ENCODE measurements at regions of chr1 and their contacts with region 1.

Region 1: GRCh38 chr1:172429331-172430127 is 9.0 kb downstream of the C1orf105 start:
- DNase-seq: peak; percentile 63
- ATAC-seq: peak; percentile 74
- H3K4me3 ChIP-seq: no peak overlapping the region
- H3K27ac ChIP-seq: no peak overlapping the region
- H3K4me1 ChIP-seq: peaks cover 26% of the 10 kb centered on the region
- H3K27me3 ChIP-seq: no peaks in the 10 kb centered on the region
- CTCF ChIP-seq: peak; percentile 75
- EP300 ChIP-seq: no peak
- POLR2A ChIP-seq: no peak
- RAD21 ChIP-seq: peak; percentile 56; the same call in 1 of the 2 replicates

Region 2: DNA sequence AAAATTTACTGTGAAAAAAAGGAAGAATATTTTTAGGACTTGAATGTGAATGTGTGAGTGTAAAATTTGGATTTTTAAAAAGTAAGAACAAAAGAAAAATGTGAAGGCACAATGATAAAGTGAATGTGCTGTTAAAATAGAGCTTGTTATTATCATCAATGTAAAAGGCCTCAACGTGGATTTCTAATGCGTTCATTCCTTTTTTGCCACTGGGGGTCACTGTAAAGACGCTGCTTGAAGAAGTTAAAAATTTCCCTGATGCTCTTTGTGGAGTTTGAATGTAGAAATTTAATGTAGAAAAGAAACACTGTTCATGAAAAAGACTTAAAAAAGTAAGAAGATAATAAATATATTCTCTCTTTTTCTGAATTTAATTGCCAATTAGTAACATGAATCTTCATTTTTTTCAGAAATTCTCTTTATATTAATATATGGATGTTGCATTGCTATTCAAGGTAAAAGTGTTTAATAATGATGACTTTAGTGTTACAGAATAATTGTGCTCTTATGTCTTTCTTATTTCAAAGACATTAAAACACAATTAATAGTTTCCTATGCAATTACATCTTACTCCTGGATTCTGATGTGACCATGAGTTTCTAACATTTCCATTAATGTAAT is 426.7 kb before region 1 on chr1:
- CTCF ChIA-PET with region 1: interaction called, 6 read pairs
- POLR2A ChIA-PET with region 1: no interaction called
- in situ Hi-C with region 1: no loop called
- intact Hi-C with region 1: loop called (anchors 1 kb)
- DNase-seq: peak; percentile 37
- ATAC-seq: no peak
- H3K4me3 ChIP-seq: no peak overlapping the region
- H3K27ac ChIP-seq: no peak overlapping the region
- H3K4me1 ChIP-seq: peaks cover 12% of the 10 kb centered on the region
- H3K27me3 ChIP-seq: no peaks in the 10 kb centered on the region
- CTCF ChIP-seq: peak; percentile 64
- EP300 ChIP-seq: no peak
- POLR2A ChIP-seq: no peak
- RAD21 ChIP-seq: no peak

Region 3: DNA sequence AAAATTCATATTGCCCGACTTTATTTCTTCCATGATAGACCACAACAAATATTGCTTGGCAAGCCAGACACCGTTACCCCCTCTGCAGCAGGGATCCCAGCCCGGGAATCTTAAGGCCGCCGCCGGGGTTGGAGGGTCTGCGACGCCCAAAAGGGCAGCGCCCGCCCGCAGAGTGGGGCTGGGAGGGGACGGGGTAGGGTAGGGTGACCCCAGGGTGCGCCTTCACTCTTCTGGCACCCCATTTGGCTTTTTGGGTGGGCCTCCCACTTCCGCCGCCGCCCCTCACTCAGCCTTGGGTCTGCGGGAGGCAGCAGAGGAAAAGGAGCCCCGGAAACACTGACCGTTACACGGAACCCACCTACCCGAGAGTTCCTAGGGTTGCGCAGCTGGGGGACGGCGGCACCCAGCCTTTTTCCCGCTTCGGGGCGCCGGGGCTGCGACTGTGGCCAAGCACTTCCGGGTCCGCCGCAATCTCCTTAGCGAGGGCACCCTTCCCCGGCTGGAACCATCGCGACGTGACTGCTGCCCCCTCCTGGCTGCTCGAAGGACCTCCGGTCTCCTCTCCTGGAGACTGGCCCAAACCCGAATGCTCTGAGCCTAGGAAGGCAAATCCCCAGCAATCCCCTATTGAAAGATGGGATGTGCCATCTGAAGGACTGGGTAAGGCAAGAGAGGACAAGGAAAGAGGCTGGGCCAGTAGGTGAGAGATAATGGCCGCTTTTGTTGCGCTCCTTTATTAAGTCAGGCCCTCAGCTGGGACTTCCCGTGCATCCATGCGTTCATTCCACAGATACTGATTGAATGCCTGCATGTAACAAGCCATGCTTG is 14.3 kb after region 1 on chr1 and contains the start of gene PIGC:
- CTCF ChIA-PET with region 1: interaction called, 11 read pairs
- POLR2A ChIA-PET with region 1: interaction called, 6 read pairs
- in situ Hi-C with region 1: no loop called
- intact Hi-C with region 1: loop called (anchors 2 kb)
- DNase-seq: peak; percentile 73
- ATAC-seq: peak; percentile 98
- H3K4me3 ChIP-seq: peak within 1 kb of the TSS; percentile 82 to 93 (median 87)
- H3K27ac ChIP-seq: peak within 1 kb of the TSS; percentile 66
- H3K4me1 ChIP-seq: peaks cover 44% of the 10 kb centered on the region
- H3K27me3 ChIP-seq: no peaks in the 10 kb centered on the region
- CTCF ChIP-seq: peak; percentile 97
- EP300 ChIP-seq: no peak; a peak in 1 of 4 replicates
- POLR2A ChIP-seq: peak; percentile 65 to 68
- RAD21 ChIP-seq: peak; percentile 71
- total RNA-seq, gene PIGC: 24.1 and 29.5 TPM in 2 replicates

Region 4: DNA sequence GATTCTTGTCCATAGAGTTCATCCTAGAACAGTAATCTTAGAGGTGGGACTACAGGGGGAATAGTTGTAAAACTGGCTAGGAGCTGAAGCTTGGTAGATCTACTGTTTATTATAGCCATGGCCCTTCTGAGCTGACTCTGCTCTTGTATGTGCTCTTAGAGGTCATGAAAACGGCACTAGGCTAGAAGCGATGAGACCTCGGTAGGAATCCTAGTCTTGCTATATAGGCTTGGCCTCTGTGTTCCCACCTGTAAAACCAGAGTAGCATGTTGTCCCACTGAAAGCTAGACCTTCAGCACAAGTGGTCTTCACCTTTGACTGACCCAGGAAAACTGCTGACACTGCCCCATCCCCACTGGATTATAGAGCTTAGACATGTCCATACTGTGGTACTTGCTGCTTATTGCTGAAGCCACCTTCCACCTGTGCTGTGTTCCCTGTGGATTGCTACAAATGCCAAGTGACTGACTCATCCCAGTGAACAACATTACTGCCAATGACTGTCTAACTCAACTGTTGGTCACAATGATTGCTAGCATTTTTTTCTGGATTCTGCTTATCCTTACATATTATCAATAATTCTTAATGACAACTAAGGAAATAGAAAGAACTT is 37.4 kb after region 1 on chr1:
- CTCF ChIA-PET with region 1: no interaction called
- POLR2A ChIA-PET with region 1: no interaction called
- in situ Hi-C with region 1: no loop called
- intact Hi-C with region 1: no loop called
- DNase-seq: peak; percentile 53
- ATAC-seq: peak; percentile 68
- H3K4me3 ChIP-seq: no peak overlapping the region
- H3K27ac ChIP-seq: no peak overlapping the region
- H3K4me1 ChIP-seq: peaks cover 60% of the 10 kb centered on the region
- H3K27me3 ChIP-seq: no peaks in the 10 kb centered on the region
- CTCF ChIP-seq: no peak
- EP300 ChIP-seq: 0 out of 4 replicates have a peak, but pooled peaks of 1 of the 2 experiments have one; percentile 7
- POLR2A ChIP-seq: no peak
- RAD21 ChIP-seq: no peak

Region 5: DNA sequence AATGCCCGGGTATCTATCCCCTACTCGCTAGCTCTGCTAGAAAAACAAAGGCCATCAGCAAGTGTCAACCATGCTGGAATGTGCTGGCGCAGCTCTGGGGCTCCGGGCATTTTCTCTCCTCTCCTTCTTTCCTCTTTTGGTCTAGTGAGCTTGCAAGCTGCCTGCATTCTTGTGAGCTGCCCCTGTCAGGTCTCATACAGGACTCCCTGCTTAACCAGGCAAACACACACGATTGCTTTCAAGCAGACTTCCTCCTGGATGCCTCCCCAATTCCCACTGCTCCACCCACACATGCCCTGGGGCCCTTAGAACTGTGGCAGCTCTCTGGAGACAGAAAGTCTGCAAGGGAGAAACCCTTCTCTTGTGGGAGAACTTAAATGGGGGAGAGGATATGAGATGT is 67.7 kb after region 1 on chr1:
- CTCF ChIA-PET with region 1: no interaction called
- POLR2A ChIA-PET with region 1: no interaction called
- in situ Hi-C with region 1: no loop called
- intact Hi-C with region 1: no loop called
- DNase-seq: peak; percentile 52
- ATAC-seq: peak; percentile 56
- H3K4me3 ChIP-seq: peak overlapping the region in 2 of 3 experiments; percentile 8 to 27; a peak in 1 of 6 replicates
- H3K27ac ChIP-seq: no peak overlapping the region
- H3K4me1 ChIP-seq: peaks cover 77% of the 10 kb centered on the region
- H3K27me3 ChIP-seq: no peaks in the 10 kb centered on the region
- CTCF ChIP-seq: no peak
- EP300 ChIP-seq: no peak
- POLR2A ChIP-seq: no peak
- RAD21 ChIP-seq: no peak

Region 6: GRCh38 chr1:172609528-172609927 is 180.0 kb after region 1 on chr1:
- CTCF ChIA-PET with region 1: no interaction called
- POLR2A ChIA-PET with region 1: no interaction called
- in situ Hi-C with region 1: no loop called
- intact Hi-C with region 1: no loop called
- DNase-seq: peak; percentile 6
- ATAC-seq: peak; percentile 66; the same call in 2 of the 3 replicates
- H3K4me3 ChIP-seq: no peak overlapping the region
- H3K27ac ChIP-seq: no peak overlapping the region
- H3K4me1 ChIP-seq: peaks cover 18% of the 10 kb centered on the region
- H3K27me3 ChIP-seq: no peaks in the 10 kb centered on the region; a peak in 1 of 5 replicates
- CTCF ChIP-seq: no peak
- EP300 ChIP-seq: no peak
- POLR2A ChIP-seq: no peak
- RAD21 ChIP-seq: no peak

Region 7: GRCh38 chr1:172662464-172663109 is 233.1 kb after region 1 on chr1:
- CTCF ChIA-PET with region 1: no interaction called
- POLR2A ChIA-PET with region 1: no interaction called
- in situ Hi-C with region 1: no loop called
- intact Hi-C with region 1: no loop called
- DNase-seq: no peak
- ATAC-seq: no peak
- H3K4me3 ChIP-seq: no peak overlapping the region
- H3K27ac ChIP-seq: no peak overlapping the region
- H3K4me1 ChIP-seq: no peaks in the 10 kb centered on the region
- H3K27me3 ChIP-seq: peaks cover 0 to 6% of the 10 kb centered on the region in 2 experiments; a peak in 2 of 5 replicates
- CTCF ChIP-seq: no peak
- EP300 ChIP-seq: no peak
- POLR2A ChIP-seq: no peak
- RAD21 ChIP-seq: no peak

Region 8: GRCh38 chr1:172719694-172720138 is 290.2 kb after region 1 on chr1:
- CTCF ChIA-PET with region 1: interaction called, 19 read pairs
- POLR2A ChIA-PET with region 1: interaction called, 4 read pairs
- in situ Hi-C with region 1: loop called (anchors 10 kb)
- intact Hi-C with region 1: loop called (anchors 1 kb)
- DNase-seq: peak; percentile 44
- ATAC-seq: peak; percentile 74; the same call in 2 of the 3 replicates
- H3K4me3 ChIP-seq: no peak overlapping the region
- H3K27ac ChIP-seq: no peak overlapping the region
- H3K4me1 ChIP-seq: peaks cover 25% of the 10 kb centered on the region
- H3K27me3 ChIP-seq: no peaks in the 10 kb centered on the region
- CTCF ChIP-seq: peak; percentile 67
- EP300 ChIP-seq: no peak
- POLR2A ChIP-seq: no peak
- RAD21 ChIP-seq: peak; percentile 30; the same call in 1 of the 2 replicates

Region 9: GRCh38 chr1:172727956-172728603 is 298.6 kb after region 1 on chr1:
- CTCF ChIA-PET with region 1: interaction called, 19 read pairs
- POLR2A ChIA-PET with region 1: no interaction called
- in situ Hi-C with region 1: loop called (anchors 10 kb)
- intact Hi-C with region 1: no loop called
- DNase-seq: peak; percentile 71
- ATAC-seq: peak; percentile 99
- H3K4me3 ChIP-seq: no peak overlapping the region
- H3K27ac ChIP-seq: no peak overlapping the region
- H3K4me1 ChIP-seq: no peaks in the 10 kb centered on the region
- H3K27me3 ChIP-seq: no peaks in the 10 kb centered on the region
- CTCF ChIP-seq: peak; percentile 70
- EP300 ChIP-seq: no peak
- POLR2A ChIP-seq: no peak
- RAD21 ChIP-seq: peak; percentile 73

Measured in HepG2 (cell line).